ENCODE measurements at regions of chr7 and their contacts with region 1.

Region 1: GRCh38 chr7:45026984-45027773 is 27.2 kb downstream of the CCM2 start:
- DNase-seq: peak; percentile 77
- ATAC-seq: peak; percentile 73
- H3K4me3 ChIP-seq: peak overlapping the region; percentile 77 to 99 (median 83)
- H3K4me3 Mint-ChIP-seq: peak overlapping the region; percentile 85
- H3K27ac ChIP-seq: peak overlapping the region; percentile 76 to 83
- H3K27ac Mint-ChIP-seq: peak overlapping the region; percentile 79
- H3K4me1 ChIP-seq: peaks cover 39 to 56% of the 10 kb centered on the region in 2 donors
- H3K4me1 Mint-ChIP-seq: peaks cover 57% of the 10 kb centered on the region
- H3K27me3 ChIP-seq: no peaks in the 10 kb centered on the region
- H3K27me3 Mint-ChIP-seq: no peaks in the 10 kb centered on the region
- CTCF ChIP-seq: no peak

Region 2: DNA sequence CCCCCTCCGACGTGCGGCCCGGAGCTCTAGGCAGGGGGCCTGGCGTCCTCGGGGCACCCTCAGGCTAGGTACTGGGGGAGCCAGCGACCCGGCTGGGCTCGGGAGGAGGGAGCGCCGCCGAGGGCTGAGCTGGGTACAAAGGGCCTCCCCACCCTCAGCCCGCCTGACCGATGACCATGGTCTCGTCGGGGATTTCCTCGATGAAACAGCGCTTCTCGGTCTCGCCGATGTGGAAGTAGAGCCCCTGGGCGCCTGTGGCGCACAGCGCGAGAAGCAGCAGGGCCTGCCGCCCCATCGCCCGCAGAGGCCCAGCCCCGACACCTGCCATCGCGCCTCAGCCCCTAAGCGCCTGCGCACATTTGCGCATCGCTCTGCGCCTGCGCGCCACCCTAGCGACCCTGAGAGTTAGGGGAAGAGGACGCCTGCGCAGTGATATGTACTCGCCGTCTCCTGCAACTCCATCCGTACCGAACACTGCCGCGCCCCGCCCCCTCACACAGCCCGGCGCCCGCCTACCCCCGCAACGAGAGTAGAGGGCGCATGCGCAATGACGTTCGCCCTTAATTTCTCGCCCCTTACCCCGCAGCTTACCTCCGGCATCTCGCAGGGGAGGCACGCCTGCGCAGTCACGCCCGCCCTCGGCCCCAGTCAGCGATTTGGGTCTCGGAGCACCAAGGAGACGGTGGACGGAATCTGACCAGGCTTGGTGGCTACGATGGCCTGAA is 445.1 kb before region 1 on chr7 and contains the start of gene TMED4:
- CTCF ChIA-PET with region 1: no interaction called
- POLR2A ChIA-PET with region 1: interaction called, 3 read pairs
- intact Hi-C with region 1: loop called (anchors 5 kb)
- DNase-seq: peak; percentile 100
- ATAC-seq: peak; percentile 92
- H3K4me3 ChIP-seq: peak within 1 kb of the TSS; percentile 72 to 99 (median 88)
- H3K4me3 Mint-ChIP-seq: peak within 1 kb of the TSS; percentile 96
- H3K27ac ChIP-seq: peak within 1 kb of the TSS; percentile 92 to 97
- H3K27ac Mint-ChIP-seq: peak within 1 kb of the TSS; percentile 99
- H3K4me1 ChIP-seq: peaks cover 21% of the 10 kb centered on the region in 2 donors
- H3K4me1 Mint-ChIP-seq: peaks cover 28% of the 10 kb centered on the region
- H3K27me3 ChIP-seq: no peaks in the 10 kb centered on the region
- H3K27me3 Mint-ChIP-seq: no peaks in the 10 kb centered on the region
- CTCF ChIP-seq: no peak
- total RNA-seq, gene TMED4: 84.0 and 84.1 TPM in 2 replicates

Region 3: DNA sequence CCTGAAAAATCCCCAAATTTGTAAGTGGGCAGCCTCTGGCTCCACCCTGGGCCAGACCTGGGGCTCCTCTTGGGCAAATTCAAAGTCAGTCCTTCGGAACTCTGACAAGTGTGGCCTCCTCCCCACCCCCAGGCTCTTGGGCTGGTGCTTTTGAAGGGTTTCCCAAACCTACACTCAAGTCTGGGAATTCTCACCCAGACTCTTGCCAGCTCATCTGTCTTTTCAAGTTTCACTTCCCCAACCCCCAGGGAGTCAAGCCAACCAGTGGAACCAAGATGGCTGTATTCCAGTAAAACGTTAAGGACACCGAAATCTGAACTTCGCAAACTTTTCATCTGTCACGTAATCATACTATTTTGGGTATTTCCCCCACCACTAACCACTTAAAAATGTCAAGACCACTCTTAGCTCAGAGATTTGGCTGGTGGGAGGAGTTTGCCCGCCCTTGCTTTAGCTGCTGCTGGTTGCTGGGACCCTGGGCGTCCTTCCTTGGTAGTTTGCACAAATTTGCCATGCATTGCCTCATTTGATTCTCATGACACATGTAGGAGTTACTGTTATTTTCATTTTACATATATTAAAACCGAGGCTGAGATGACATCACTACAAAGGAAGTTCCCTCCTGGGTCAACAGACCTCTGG is 46.7 kb before region 1 on chr7:
- CTCF ChIA-PET with region 1: interaction called, 9 read pairs
- POLR2A ChIA-PET with region 1: interaction called, 22 read pairs
- intact Hi-C with region 1: loop called (anchors 1 kb)
- DNase-seq: peak; percentile 88
- ATAC-seq: peak; percentile 46
- H3K4me3 ChIP-seq: peak overlapping the region in 2 of 5 experiments; percentile 1 to 90
- H3K4me3 Mint-ChIP-seq: peak overlapping the region; percentile 97
- H3K27ac ChIP-seq: peak overlapping the region; percentile 79 to 93
- H3K27ac Mint-ChIP-seq: peak overlapping the region; percentile 98
- H3K4me1 ChIP-seq: peaks cover 53 to 75% of the 10 kb centered on the region in 2 donors
- H3K4me1 Mint-ChIP-seq: peaks cover 86% of the 10 kb centered on the region
- H3K27me3 ChIP-seq: no peaks in the 10 kb centered on the region
- H3K27me3 Mint-ChIP-seq: no peaks in the 10 kb centered on the region
- CTCF ChIP-seq: no peak

Region 4: GRCh38 chr7:44999245-45000095 is 27.7 kb before region 1 on chr7:
- CTCF ChIA-PET with region 1: interaction called, 40 read pairs
- POLR2A ChIA-PET with region 1: interaction called, 77 read pairs
- intact Hi-C with region 1: loop called (anchors 1 kb)
- DNase-seq: peak; percentile 100
- ATAC-seq: peak; percentile 84
- H3K4me3 ChIP-seq: peak overlapping the region; percentile 40 to 99 (median 76)
- H3K4me3 Mint-ChIP-seq: peak overlapping the region; percentile 99
- H3K27ac ChIP-seq: peak overlapping the region; percentile 65 to 72
- H3K27ac Mint-ChIP-seq: peak overlapping the region; percentile 98
- H3K4me1 ChIP-seq: peaks cover 36 to 50% of the 10 kb centered on the region in 2 donors
- H3K4me1 Mint-ChIP-seq: peaks cover 57% of the 10 kb centered on the region
- H3K27me3 ChIP-seq: no peaks in the 10 kb centered on the region
- H3K27me3 Mint-ChIP-seq: no peaks in the 10 kb centered on the region
- CTCF ChIP-seq: no peak

Region 5: DNA sequence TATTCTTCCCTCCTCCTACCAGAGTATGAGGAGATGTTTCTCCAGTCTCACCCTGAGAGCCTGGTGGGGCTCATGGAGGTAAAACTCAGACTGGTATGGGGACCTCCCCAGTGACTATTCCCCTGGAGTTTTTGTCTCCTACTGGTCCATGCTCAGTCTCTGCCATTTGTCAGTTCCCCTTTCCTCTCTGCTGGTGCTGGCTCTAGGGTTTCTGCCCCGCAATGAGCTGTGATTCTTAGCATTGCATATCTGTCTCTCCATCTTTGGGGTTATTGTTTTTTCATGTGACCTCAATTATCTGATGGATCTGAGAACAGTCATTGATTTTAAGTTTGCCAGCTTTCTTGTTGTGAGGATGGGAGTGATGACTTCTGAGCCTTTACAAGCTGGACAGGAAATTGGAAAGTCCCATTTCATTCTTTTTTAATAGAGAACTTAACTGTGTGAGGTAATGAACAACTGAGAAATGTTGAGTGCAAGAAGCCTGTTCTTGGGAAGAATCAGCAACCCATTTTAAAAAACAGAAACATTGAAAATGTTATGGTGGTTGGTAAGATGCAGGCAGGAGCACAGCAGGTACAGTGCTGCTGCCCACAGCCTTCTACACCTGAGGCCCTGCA is 34.7 kb after region 1 on chr7:
- CTCF ChIA-PET with region 1: no interaction called
- POLR2A ChIA-PET with region 1: interaction called, 5 read pairs
- intact Hi-C with region 1: loop called (anchors 5 kb)
- DNase-seq: no peak
- ATAC-seq: no peak
- H3K4me3 ChIP-seq: no peak overlapping the region
- H3K4me3 Mint-ChIP-seq: no peak overlapping the region
- H3K27ac ChIP-seq: peak overlapping the region in 1 of 2 donors; percentile 27
- H3K27ac Mint-ChIP-seq: peak overlapping the region; percentile 74
- H3K4me1 ChIP-seq: peaks cover 11 to 14% of the 10 kb centered on the region in 2 donors
- H3K4me1 Mint-ChIP-seq: peaks cover 59% of the 10 kb centered on the region
- H3K27me3 ChIP-seq: no peaks in the 10 kb centered on the region
- H3K27me3 Mint-ChIP-seq: no peaks in the 10 kb centered on the region
- CTCF ChIP-seq: no peak